Esophagus muscularis mucosa (tissue), 4 donors: ENCODE measurements at regions of chr16 and their contacts with region 1.

Region 1: DNA sequence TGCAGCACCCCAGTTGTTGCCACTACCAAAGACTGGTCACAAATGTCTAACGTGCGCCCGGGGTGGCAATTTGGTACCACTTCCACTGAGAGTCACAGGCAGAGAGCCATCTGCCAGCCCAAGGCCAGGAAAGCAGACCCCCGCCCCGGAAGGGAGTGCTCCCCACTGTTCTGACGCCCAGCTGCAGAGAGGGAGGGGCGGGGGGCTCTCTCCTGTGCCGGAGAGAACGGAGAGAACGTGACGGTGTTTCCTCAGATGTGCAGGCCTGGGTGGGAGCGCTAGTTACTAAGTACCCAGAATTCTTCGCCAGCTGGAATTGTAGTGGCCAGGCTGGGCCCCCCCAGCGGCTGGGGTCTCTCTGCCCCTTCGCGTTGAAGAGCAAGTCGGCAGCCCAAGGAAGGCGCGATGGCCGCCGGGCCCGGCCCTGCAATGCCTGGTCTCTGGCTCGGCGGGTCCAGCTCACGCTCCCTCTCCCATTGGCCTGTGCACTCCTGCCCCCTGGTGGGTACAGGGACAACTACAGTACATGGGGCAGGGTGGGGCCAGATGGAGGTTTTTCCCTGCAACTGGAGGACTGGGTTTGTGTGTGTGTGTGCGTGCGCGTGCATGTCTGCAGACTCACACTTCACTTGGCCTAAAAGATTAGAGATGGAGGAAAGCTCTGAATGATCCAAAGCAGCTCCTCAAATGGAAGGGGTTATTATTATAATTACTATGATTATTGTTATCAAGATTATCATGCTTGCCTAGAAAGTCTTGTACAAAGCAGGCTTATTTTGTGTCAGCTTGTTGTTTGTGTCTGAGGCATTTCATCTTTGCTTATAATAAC is 107.1 kb downstream of the AMFR start:
- DNase-seq: peak; percentile 95
- H3K4me3 ChIP-seq: peak overlapping the region; percentile 34 to 40 (median 38)
- H3K27ac ChIP-seq: no peak overlapping the region
- H3K4me1 ChIP-seq: peaks cover 0 to 10% (median 7%) of the 10 kb centered on the region in 4 donors
- H3K27me3 ChIP-seq: peaks cover 0 to 5% (median 0%) of the 10 kb centered on the region in 4 donors
- CTCF ChIP-seq: peak; percentile 94 to 96 (median 95)
- EP300 ChIP-seq: no peak
- POLR2A ChIP-seq: no peak

Region 2: DNA sequence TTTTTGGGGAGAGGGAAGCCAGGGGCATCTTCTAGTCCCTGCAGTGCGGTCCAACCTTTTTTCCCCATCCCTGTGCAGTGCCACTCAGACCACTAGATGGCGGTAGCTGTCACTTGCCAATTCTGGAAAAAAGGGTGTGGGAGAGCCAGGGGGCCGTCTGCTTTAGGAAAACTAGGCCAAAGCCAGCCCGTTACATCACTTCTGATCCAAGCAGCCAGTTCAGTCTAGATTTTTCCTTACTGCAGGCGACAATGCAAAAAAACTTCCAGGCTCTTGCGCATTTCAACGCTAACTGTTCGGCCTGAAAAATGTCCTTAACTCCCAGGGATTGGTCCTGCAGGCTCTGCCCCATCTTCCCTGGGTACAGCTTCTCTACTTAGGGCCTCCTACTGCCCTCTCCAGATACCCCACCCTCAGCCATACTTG is 373.8 kb before region 1 on chr16:
- intact Hi-C with region 1: loop called (anchors 2 kb)
- DNase-seq: peak; percentile 93
- H3K4me3 ChIP-seq: no peak overlapping the region
- H3K27ac ChIP-seq: no peak overlapping the region
- H3K4me1 ChIP-seq: peaks cover 0 to 18% (median 14%) of the 10 kb centered on the region in 4 donors
- H3K27me3 ChIP-seq: no peaks in the 10 kb centered on the region
- CTCF ChIP-seq: peak; percentile 88 to 96 (median 93)
- EP300 ChIP-seq: no peak
- POLR2A ChIP-seq: no peak

Region 3: GRCh38 chr16:56041686-56042085 is 276.5 kb before region 1 on chr16:
- intact Hi-C with region 1: loop called (anchors 2 kb)
- DNase-seq: peak; percentile 60
- H3K4me3 ChIP-seq: no peak overlapping the region
- H3K27ac ChIP-seq: no peak overlapping the region
- H3K4me1 ChIP-seq: no peaks in the 10 kb centered on the region
- H3K27me3 ChIP-seq: no peaks in the 10 kb centered on the region
- CTCF ChIP-seq: peak in 1 of 3 experiments; percentile 24
- EP300 ChIP-seq: no peak
- POLR2A ChIP-seq: no peak